Breast epithelium (tissue), 4 donors: ENCODE measurements at regions of chr11 and their contacts with region 1.

Region 1: GRCh38 chr11:75785187-75785586 is 16.6 kb downstream of the DGAT2 start:
- DNase-seq: no peak
- H3K4me3 ChIP-seq: no peak overlapping the region
- H3K27ac ChIP-seq: no peak overlapping the region
- H3K4me1 ChIP-seq: no peaks in the 10 kb centered on the region
- H3K27me3 ChIP-seq: no peaks in the 10 kb centered on the region
- CTCF ChIP-seq: no peak
- POLR2A ChIP-seq: no peak

Region 2: GRCh38 chr11:75532200-75533048 is 252.8 kb before region 1 on chr11:
- intact Hi-C with region 1: no loop called
- DNase-seq: peak; percentile 41 to 64
- H3K4me3 ChIP-seq: no peak overlapping the region
- H3K27ac ChIP-seq: no peak overlapping the region
- H3K4me1 ChIP-seq: no peaks in the 10 kb centered on the region
- H3K27me3 ChIP-seq: no peaks in the 10 kb centered on the region
- CTCF ChIP-seq: peak; percentile 84 to 96 (median 94)
- POLR2A ChIP-seq: no peak

Region 3: DNA sequence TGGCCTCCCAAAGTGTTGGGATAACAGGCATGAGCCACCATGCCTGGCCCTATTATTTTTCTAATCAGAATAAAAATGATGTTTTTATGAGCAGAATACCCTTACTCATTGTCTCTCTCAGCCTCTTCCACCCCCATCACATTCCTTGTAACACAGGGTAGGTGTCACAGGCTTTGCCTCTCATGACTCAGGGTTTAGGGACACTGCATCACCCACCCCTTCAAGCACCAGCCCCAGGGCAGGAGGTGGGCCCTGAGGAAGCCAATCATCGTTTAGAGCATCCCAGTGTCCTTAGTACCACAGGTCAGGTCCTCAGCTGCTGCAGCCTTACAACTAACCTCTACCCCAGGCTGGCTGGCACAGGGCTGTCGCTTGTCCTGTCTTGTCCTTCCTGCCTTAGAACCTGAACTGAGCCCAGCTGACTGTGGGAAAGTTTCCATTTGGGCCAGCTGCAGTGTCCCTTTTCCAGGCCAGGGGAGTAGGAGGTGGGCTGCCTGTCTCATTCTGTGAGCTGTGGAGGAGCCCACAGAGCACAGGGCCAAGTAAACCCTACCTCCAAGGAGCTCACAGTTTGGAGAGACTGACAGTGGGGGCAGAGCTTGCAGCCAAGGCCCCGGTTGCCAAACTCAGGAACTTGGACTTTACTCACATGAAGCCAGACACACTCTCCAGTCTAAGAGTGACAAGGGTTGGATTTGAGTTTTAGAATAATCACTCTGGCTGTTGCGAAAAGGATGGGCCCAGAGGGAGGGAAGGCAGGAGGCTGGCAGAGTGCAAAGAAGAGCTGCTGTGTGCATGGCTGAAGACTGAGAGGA is 10.3 kb after region 1 on chr11:
- intact Hi-C with region 1: loop called (anchors 1 kb)
- DNase-seq: no peak
- H3K4me3 ChIP-seq: no peak overlapping the region
- H3K27ac ChIP-seq: no peak overlapping the region
- H3K4me1 ChIP-seq: no peaks in the 10 kb centered on the region
- H3K27me3 ChIP-seq: no peaks in the 10 kb centered on the region
- CTCF ChIP-seq: no peak
- POLR2A ChIP-seq: no peak

Region 4: DNA sequence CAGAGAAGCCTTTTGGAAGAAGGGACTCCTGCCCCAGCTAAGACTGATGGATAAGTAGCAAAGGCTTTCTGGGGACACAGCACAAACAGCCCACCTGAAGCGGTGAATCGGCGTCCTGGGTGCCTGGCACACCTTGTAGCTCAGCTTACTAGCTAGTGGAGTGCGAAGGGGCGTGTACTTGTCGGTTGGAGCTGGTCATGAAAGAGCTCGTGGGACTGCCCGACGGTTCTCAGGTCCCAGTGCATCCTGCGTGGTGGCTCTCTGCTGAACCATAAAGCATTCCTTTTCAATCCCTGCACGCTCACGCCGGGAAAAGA is 29.1 kb after region 1 on chr11:
- intact Hi-C with region 1: no loop called
- DNase-seq: no peak
- H3K4me3 ChIP-seq: peak overlapping the region; percentile 83 to 99 (median 95)
- H3K27ac ChIP-seq: peak overlapping the region; percentile 95 to 98
- H3K4me1 ChIP-seq: peaks cover 5 to 13% of the 10 kb centered on the region in 2 donors
- H3K27me3 ChIP-seq: no peaks in the 10 kb centered on the region
- CTCF ChIP-seq: no peak
- POLR2A ChIP-seq: no peak

Region 5: GRCh38 chr11:75826461-75827230 is 41.5 kb after region 1 on chr11:
- intact Hi-C with region 1: no loop called
- DNase-seq: no peak
- H3K4me3 ChIP-seq: peak overlapping the region; percentile 13 to 47 (median 16)
- H3K27ac ChIP-seq: peak overlapping the region; percentile 73 to 87
- H3K4me1 ChIP-seq: no peaks in the 10 kb centered on the region
- H3K27me3 ChIP-seq: no peaks in the 10 kb centered on the region
- CTCF ChIP-seq: no peak
- POLR2A ChIP-seq: no peak

Region 6: GRCh38 chr11:77602381-77603088 is 1817.3 kb after region 1 on chr11:
- intact Hi-C with region 1: no loop called
- DNase-seq: no peak
- H3K4me3 ChIP-seq: no peak overlapping the region
- H3K27ac ChIP-seq: no peak overlapping the region
- H3K4me1 ChIP-seq: no peaks in the 10 kb centered on the region
- H3K27me3 ChIP-seq: no peaks in the 10 kb centered on the region
- CTCF ChIP-seq: no peak
- POLR2A ChIP-seq: no peak